ENCODE measurements at regions of chr6 and their contacts with region 1.

Region 1: DNA sequence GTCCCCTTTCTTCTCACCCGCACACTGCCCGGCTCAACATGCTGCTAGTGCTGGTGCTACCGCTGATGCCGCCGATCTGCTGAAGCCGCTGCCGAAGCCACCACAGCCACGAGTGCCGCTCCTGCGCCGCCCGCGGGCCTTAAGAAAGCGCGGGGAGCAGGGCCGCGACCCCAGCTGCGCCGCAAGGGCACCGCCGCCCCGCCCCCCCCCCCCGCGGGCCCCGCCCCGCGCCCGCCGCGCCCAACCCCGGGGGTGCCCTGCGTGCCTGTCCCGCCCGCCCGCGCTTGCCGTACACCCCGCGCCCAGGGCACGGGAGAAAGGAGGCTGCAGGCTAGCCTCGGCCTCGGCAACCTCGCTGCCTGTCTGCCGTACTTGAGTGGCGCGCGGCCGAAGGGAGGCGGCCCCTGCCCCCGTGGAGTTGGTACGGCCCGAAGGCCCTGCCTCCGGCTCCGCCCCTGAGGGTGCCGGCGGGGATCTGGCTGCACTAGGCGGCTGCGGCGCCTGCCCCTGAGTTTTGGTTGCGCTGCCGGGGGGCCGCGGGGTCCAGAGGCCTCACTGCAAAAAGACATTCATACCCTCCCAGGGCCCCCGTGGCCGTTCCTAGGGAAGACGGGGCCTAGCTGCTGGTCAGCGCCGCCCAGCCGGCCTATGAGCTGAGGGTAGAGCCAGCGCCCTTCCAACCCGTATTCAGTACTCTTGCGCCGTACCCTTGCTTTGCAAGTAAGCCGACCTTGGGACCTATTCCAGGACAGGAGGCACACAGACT is at the start of gene SOD2:
- DNase-seq: peak; percentile 62 to 79
- ATAC-seq: peak; percentile 87 to 90
- H3K4me3 ChIP-seq: peak within 1 kb of the TSS; percentile 72
- H3K27ac ChIP-seq: peak within 1 kb of the TSS; percentile 95 to 100
- H3K4me1 ChIP-seq: peaks cover 20% of the 10 kb centered on the region
- CTCF ChIP-seq: no peak
- EP300 ChIP-seq: no peak
- POLR2A ChIP-seq: peak; percentile 89
- RAD21 ChIP-seq: no peak
- polyA plus RNA-seq, gene SOD2: 34.8 and 63.2 TPM in 2 replicates

Region 2: GRCh38 chr6:159682295-159682694 is 11.0 kb before region 1 on chr6:
- CTCF ChIA-PET with region 1: interaction called, 16 read pairs
- POLR2A ChIA-PET with region 1: no interaction called
- DNase-seq: no peak
- ATAC-seq: no peak
- H3K4me3 ChIP-seq: no peak overlapping the region
- H3K27ac ChIP-seq: no peak overlapping the region
- H3K4me1 ChIP-seq: peaks cover 15% of the 10 kb centered on the region
- CTCF ChIP-seq: no peak
- EP300 ChIP-seq: no peak
- POLR2A ChIP-seq: no peak
- RAD21 ChIP-seq: no peak

Region 3: GRCh38 chr6:159720708-159721107 is 27.4 kb after region 1 on chr6:
- CTCF ChIA-PET with region 1: interaction called, 12 read pairs
- POLR2A ChIA-PET with region 1: no interaction called
- DNase-seq: peak; percentile 46 to 53
- ATAC-seq: peak in 1 of 2 experiments; percentile 50; a peak in 3 of 6 replicates
- H3K4me3 ChIP-seq: no peak overlapping the region
- H3K27ac ChIP-seq: no peak overlapping the region
- H3K4me1 ChIP-seq: peaks cover 22% of the 10 kb centered on the region
- CTCF ChIP-seq: peak; percentile 45; the same call in 2 of the 3 replicates
- EP300 ChIP-seq: no peak
- POLR2A ChIP-seq: no peak
- RAD21 ChIP-seq: 0 out of 5 replicates have a peak, but pooled peaks of 1 of the 2 experiments have one; percentile 6

Region 4: DNA sequence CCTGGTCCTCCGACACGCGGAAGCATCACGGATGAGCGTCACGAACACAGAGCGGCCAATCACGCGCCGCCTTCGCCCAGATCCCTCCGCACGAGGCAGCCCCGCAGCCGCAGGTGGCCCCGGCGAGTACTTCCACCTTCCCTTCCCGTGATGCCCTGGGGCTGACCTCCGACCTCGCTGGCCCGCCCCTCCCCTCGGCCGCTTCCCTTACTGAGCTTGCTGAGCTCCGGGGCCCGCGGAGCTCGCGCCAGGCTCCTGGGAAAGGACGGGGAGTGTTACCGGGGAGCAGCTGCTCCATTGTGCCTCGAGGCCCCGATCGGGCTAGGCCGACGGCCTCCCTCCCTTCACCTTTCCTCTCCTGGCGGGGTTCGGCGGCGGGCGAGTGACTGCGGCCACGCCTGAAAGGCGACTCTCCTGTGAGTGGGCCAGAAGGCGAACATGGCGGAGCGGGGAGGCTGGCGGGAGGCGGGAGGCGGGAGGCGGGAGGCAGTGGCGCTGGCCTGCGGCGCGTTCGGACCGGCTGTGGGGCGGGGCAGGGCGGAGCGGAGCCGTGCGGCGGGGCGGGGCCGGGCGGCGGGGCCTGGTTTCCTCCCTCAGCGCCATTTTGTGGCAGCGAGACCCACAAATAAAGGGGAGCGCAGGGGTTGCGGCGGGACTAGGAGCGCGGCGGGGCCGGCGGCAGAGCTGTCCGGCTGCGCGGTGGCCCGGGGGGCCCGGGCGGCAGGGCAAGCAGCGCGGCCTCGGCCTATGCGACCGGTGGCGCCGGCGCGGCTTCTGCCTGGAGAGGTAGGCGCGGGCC is 33.8 kb after region 1 on chr6 and contains the start of gene WTAP:
- CTCF ChIA-PET with region 1: interaction called, 8 read pairs
- POLR2A ChIA-PET with region 1: interaction called, 29 read pairs
- DNase-seq: peak; percentile 74 to 97
- ATAC-seq: peak; percentile 92 to 94
- H3K4me3 ChIP-seq: peak within 1 kb of the TSS; percentile 79
- H3K27ac ChIP-seq: peak within 1 kb of the TSS; percentile 98 to 99
- H3K4me1 ChIP-seq: peaks cover 22% of the 10 kb centered on the region; the same call in 2 of the 3 replicates
- CTCF ChIP-seq: no peak
- EP300 ChIP-seq: no peak
- POLR2A ChIP-seq: peak; percentile 72
- RAD21 ChIP-seq: no peak
- polyA plus RNA-seq, gene WTAP: 42.4 and 46.1 TPM in 2 replicates

Region 5: DNA sequence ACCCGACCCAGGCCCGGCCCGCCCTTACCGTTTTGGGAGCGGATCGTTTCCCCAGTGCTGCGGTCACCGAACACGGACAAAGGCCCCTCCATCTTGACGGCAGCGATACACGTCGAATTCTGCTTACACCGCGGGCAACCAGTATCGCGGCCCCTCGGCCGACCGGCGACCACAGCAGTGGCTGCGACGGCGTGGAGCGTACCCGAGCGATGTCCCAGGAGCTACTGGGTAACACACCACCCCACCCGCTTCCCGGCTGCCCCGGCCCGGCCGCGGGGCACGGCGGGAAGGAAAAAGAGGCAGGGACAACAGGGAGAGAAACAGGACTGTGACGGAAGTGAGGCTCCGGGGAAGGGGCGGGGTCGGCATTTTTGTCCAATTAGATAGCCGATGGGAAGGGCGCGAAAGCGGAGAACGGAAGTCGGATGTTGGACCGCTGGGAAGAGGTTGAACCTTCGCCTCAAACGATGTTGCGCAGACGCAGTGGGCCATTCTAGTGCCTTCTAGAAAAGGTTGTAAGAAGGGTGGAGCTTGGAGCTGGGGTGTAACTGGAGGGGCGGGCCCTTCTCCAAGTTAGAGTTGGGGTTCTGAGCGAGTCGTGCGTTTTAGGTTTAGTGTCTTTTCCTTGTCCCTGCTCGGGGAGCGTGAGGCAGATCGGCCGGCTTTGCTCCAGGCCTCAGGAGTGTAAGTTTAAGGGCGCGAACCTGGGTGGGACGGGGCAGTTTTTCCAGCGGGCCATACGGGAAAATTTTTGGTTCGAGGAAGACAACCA is 96.3 kb after region 1 on chr6 and contains the start of gene TCP1:
- CTCF ChIA-PET with region 1: interaction called, 5 read pairs
- POLR2A ChIA-PET with region 1: interaction called, 12 read pairs
- DNase-seq: peak; percentile 85 to 98
- ATAC-seq: peak; percentile 90 to 91
- H3K4me3 ChIP-seq: peak within 1 kb of the TSS; percentile 92
- H3K27ac ChIP-seq: peak within 1 kb of the TSS; percentile 95 to 99
- H3K4me1 ChIP-seq: peaks cover 42% of the 10 kb centered on the region
- CTCF ChIP-seq: no peak
- EP300 ChIP-seq: no peak
- POLR2A ChIP-seq: peak; percentile 95
- RAD21 ChIP-seq: no peak
- polyA plus RNA-seq, gene TCP1: 170 and 215 TPM in 2 replicates

Region 6: DNA sequence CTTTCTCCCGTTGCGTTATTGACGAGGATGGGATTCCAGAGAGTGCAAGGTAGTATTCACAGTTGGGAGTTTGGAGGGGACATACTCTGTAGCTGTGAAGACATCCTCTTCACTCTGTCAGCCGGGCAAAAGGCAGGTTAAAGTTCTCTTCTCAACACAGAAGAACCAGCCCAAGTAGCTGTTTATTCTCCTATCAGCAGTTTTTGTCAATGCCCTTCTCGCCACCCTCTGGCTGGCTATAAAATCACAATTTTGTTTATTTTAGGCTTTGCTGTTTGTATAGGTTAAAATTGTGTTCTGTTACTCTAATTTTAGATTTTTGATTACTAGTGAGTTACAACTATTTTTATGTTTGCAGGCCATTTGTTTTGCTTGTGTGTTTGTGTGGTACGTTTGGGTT is 159.6 kb after region 1 on chr6:
- CTCF ChIA-PET with region 1: interaction called, 29 read pairs
- POLR2A ChIA-PET with region 1: no interaction called
- DNase-seq: peak in 1 of 2 experiments; percentile 12
- ATAC-seq: peak; percentile 56 to 61; a peak in 3 of 6 replicates
- H3K4me3 ChIP-seq: no peak overlapping the region
- H3K27ac ChIP-seq: no peak overlapping the region
- H3K4me1 ChIP-seq: no peaks in the 10 kb centered on the region
- CTCF ChIP-seq: peak; percentile 43
- EP300 ChIP-seq: no peak
- POLR2A ChIP-seq: no peak
- RAD21 ChIP-seq: peak; percentile 42 to 55; a peak in 3 of 5 replicates

Region 7: GRCh38 chr6:160363016-160363996 is 670.0 kb after region 1 on chr6:
- CTCF ChIA-PET with region 1: no interaction called
- POLR2A ChIA-PET with region 1: no interaction called
- DNase-seq: no peak
- ATAC-seq: peak in 1 of 2 experiments; percentile 12; a peak in 2 of 6 replicates
- H3K4me3 ChIP-seq: no peak overlapping the region
- H3K27ac ChIP-seq: peak overlapping the region in 1 of 2 experiments; percentile 31; a peak in 2 of 6 replicates
- H3K4me1 ChIP-seq: peaks cover 57% of the 10 kb centered on the region
- CTCF ChIP-seq: no peak
- EP300 ChIP-seq: no peak
- POLR2A ChIP-seq: no peak
- RAD21 ChIP-seq: no peak

Measured in A549 (cell line).